Breast epithelium (tissue), 4 donors: ENCODE measurements at regions of chr21 and their contacts with region 1.

Region 1: DNA sequence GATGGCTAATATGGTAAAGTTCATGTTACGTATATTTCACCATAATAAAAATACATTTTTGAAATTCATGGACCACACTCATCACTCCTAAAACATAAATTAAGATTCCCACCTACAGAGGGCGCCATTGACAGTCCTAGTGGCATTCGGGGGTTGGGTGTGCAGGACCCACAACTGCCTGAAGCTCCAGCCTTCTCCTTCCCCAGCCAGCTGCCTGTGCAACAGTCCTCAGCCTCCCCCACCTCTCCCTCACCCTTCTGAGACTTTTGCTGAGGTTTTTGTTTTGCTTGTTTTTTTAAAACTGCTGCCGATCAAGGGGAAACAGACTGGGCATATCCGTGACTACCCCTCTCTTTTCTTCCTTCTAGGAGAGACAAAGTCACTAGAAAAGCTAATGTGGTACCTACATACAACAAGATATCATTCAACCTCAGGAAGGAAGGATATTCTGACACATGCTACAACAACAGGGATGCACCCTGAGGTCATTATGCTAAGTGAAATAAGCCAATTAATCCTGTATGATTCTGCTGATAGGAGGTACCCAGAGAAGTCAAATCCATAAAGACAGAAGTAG is 9.2 kb upstream of the EVA1C start:
- DNase-seq: no peak
- H3K4me3 ChIP-seq: no peak overlapping the region
- H3K27ac ChIP-seq: no peak overlapping the region
- H3K4me1 ChIP-seq: no peaks in the 10 kb centered on the region
- H3K27me3 ChIP-seq: no peaks in the 10 kb centered on the region
- CTCF ChIP-seq: peak; percentile 50 to 74 (median 73)
- POLR2A ChIP-seq: no peak

Region 2: DNA sequence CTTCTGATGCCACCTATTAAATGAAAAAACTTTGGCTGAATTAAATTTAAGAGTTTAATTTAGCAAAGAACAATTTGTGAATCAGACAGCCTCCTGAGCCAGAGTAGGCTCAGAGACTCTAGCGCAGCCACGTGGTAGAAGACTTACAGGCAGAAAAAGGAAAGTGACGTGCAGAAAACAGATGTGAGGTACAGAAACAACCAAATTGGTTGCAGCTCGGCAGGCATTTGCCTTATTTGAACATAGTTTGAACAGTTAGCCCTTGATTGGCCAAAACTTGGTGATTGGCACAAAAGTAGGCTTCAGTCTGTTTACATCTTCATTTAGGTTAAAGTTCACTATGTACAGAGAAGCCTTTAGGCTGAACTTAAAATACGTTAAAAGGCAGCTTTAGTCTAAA is 159.1 kb after region 1 on chr21:
- intact Hi-C with region 1: loop called (anchors 5 kb)
- DNase-seq: no peak
- H3K4me3 ChIP-seq: no peak overlapping the region
- H3K27ac ChIP-seq: peak overlapping the region; percentile 23 to 25
- H3K4me1 ChIP-seq: no peaks in the 10 kb centered on the region
- H3K27me3 ChIP-seq: no peaks in the 10 kb centered on the region
- CTCF ChIP-seq: peak in 2 of 3 donors; percentile 9 to 16
- POLR2A ChIP-seq: no peak

Region 3: DNA sequence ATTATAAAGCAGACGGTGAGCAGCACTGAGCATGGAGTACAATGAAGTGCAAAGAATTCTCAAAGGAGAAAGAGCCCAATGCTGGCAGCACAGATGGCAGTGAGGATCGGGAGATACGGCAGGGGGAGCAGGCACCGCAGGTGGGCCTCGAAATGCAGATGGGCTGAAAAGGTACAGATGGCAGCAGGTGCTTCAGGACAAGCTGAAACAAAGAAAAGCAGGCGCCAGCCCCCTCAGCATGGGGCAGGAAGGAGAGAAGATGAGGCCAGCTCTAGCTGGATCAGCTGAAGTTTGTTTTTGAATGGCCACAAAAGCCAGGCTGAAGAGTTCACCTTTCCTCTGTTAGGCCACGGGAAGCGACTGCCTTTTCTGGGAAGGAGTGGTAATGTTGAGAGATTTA is 201.2 kb after region 1 on chr21:
- intact Hi-C with region 1: loop called (anchors 10 kb)
- DNase-seq: no peak
- H3K4me3 ChIP-seq: no peak overlapping the region
- H3K27ac ChIP-seq: no peak overlapping the region
- H3K4me1 ChIP-seq: no peaks in the 10 kb centered on the region
- H3K27me3 ChIP-seq: no peaks in the 10 kb centered on the region
- CTCF ChIP-seq: no peak
- POLR2A ChIP-seq: no peak